GM18951 (cell line): ENCODE measurements at regions of chr10 and their contacts with region 1.

Region 1: DNA sequence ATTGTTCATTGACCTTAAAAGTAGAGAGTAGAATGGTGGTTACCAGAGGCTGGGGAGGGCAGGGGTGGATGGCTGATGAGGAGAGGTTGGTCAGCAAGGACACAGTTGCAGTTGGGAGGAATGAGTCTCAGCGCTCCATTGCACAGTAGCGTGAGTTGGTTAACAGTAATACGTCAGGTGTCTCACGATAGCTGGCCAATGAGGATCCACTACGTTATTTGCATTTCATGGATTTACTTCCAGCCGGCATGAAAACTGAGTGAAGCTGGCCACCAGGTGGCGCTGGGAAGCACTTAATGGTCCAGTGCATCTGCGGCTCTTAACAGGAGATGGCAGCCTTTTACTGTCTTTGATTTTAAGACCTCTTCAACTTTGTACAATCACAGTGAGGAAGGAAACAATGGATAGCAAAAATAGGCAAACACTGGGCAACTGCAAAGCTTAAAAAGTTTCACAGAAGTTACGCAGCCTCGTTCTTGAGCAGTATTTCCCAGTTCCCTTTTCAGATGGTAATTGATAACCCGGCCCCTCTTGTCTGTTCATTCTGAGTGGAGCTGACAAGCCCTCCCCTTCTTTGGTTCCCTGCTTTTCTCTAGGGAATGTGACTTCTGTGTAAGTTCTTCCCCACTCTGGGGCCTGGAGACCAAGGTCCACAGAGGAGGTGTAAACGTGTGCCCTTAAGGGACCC is 23.7 kb downstream of the AKR1E2 start:
- POLR2A ChIP-seq: no peak

Region 2: DNA sequence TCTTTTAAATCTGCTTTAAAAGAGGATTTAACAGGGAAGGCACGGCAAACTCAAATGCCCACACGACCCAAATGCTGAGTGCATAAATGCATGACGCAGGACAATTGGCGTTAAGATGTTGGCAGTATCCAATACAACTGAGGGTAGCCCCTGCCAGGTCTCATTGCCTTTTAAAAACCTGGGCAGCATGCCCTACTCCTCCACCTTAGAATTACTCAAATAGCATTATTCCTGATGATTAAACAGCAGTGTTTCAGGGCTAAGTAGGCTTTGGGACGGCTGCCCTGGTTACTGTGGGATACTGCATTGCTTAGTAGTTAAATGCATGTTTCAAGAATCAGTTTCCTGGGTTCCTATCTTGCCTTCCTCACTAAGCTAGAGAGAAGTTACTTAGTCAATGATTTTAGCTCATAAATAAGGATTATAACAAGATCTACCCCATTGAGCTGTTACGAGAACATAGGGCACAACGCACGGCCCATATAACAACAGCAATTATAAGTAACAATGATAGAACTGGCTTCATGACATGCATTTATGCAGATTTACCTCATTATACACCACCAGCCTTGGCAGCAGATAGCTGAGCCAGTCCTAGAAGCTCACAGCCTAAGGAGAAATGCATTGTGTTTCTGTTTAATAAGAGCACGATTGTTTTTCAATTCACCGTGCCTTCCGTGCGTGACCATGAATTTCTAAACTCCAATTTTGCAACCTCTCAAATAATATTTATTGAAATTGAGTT is 547.0 kb after region 1 on chr10:
- in situ Hi-C with region 1: loop called (anchors 25 kb)
- POLR2A ChIP-seq: no peak

Region 3: DNA sequence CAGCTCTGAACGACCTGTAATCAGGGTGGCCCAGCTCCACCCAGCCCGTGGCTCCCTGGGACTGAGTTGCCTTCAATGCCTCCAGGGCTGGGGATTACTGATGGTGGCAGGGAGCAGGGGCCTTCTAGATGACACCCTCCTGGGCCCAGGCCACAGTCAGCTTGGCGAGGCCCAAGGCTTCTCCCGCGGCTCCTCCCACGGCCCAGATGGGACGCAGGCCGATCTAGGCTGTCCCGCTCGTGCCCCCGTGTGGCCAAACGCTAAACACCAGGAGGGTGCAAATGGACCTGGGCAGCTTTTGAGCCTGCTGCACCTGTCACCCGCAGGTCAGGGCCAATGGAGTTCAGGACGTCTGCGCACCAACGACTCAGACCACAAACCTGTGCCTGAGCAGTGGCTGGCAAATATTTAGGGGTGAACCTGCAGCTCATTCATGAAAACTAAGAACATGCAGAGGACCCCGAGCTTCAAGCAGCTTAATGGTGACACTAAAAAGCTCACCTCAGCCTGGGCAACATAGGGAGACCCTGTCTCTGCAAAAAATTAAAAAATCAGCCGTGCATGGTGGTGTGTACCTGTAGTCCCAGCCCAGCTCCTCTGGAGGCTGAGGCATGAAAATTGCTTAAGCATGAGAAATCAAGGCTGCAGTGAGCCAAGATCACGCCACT is 773.5 kb after region 1 on chr10:
- in situ Hi-C with region 1: loop called (anchors 25 kb)
- POLR2A ChIP-seq: no peak